Activated B cell treated with CpG ODN at 0.5 μM for 24 hours (primary cell): ENCODE measurements at regions of chr1 and their contacts with region 1.

Region 1: GRCh38 chr1:34852677-34853217 is 6.8 kb downstream of the SMIM12 start:
- DNase-seq: peak; percentile 69
- ATAC-seq: peak; percentile 100
- H3K4me3 Mint-ChIP-seq: no peak overlapping the region
- H3K27ac Mint-ChIP-seq: peak overlapping the region; percentile 46
- H3K4me1 Mint-ChIP-seq: peaks cover 14% of the 10 kb centered on the region
- H3K27me3 Mint-ChIP-seq: no peaks in the 10 kb centered on the region
- CTCF ChIP-seq: peak; percentile 91

Region 2: GRCh38 chr1:34786521-34787325 is 66.0 kb before region 1 on chr1:
- CTCF ChIA-PET with region 1: interaction called, 3 read pairs
- POLR2A ChIA-PET with region 1: no interaction called
- intact Hi-C with region 1: loop called (anchors 1 kb)
- DNase-seq: no peak
- ATAC-seq: peak; percentile 82
- H3K4me3 Mint-ChIP-seq: no peak overlapping the region
- H3K27ac Mint-ChIP-seq: no peak overlapping the region
- H3K4me1 Mint-ChIP-seq: peaks cover 7% of the 10 kb centered on the region
- H3K27me3 Mint-ChIP-seq: peaks cover 52% of the 10 kb centered on the region
- CTCF ChIP-seq: no peak

Region 3: GRCh38 chr1:34865981-34866761 is 13.4 kb after region 1 on chr1:
- CTCF ChIA-PET with region 1: interaction called, 5 read pairs
- POLR2A ChIA-PET with region 1: interaction called, 7 read pairs
- intact Hi-C with region 1: loop called (anchors 1 kb)
- DNase-seq: peak; percentile 95
- ATAC-seq: peak; percentile 80
- H3K4me3 Mint-ChIP-seq: peak overlapping the region; percentile 90
- H3K27ac Mint-ChIP-seq: peak overlapping the region; percentile 88
- H3K4me1 Mint-ChIP-seq: peaks cover 17% of the 10 kb centered on the region
- H3K27me3 Mint-ChIP-seq: no peaks in the 10 kb centered on the region
- CTCF ChIP-seq: peak; percentile 93

Region 4: GRCh38 chr1:35564037-35564883 is 711.5 kb after region 1 on chr1:
- CTCF ChIA-PET with region 1: no interaction called
- POLR2A ChIA-PET with region 1: no interaction called
- intact Hi-C with region 1: loop called (anchors 10 kb)
- DNase-seq: peak; percentile 60
- ATAC-seq: peak; percentile 82
- H3K4me3 Mint-ChIP-seq: no peak overlapping the region
- H3K27ac Mint-ChIP-seq: no peak overlapping the region
- H3K4me1 Mint-ChIP-seq: peaks cover 4% of the 10 kb centered on the region
- H3K27me3 Mint-ChIP-seq: no peaks in the 10 kb centered on the region
- CTCF ChIP-seq: peak; percentile 55